HEK293 (cell line): ENCODE measurements at regions of chr16 and their contacts with region 1.

Region 1: DNA sequence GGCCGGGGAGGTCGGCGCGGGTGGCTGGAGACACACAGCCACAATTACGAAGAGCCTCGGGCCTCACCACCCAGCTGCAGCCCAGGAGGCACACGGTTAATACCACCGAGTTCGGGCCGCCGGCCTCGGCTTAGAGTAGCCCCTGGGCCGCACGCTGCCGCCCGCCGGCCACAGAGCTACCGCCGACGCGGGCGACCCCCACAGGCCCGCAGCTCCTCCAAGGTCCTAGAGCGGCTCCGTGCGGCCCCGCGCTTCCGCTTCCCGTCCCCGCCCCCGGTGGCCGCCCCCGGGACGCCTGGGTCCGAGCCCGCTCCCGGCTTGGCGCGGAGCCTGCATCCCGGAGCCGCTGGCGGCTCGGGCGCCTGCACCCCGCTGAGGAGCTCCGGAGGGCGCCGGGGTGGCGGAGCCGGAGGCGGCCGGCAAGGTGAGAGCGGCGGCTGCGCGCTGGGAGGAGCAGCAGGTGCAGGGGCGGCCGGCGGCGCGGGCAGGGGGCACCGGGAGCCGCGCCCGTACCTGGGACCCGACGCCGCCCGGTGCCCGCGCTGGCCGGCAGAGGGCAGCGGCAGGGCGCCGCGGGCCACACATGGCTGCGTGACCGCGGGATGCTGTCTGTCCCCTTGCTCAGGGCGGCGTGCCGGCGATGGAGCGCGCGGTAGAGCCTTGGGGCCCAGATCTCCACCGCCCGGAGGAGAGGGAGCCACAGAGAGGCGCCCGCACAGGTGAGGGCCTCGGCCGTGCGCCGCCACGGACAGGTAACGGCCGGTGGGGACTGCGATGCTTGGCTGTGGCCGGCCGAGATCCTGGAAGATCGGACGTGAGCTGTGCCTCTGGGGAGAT is at the start of gene ZNF48:
- H3K4me3 ChIP-seq: peak within 1 kb of the TSS; percentile 71
- H3K27ac ChIP-seq: peak within 1 kb of the TSS; percentile 84
- H3K4me1 ChIP-seq: peaks cover 16% of the 10 kb centered on the region
- CTCF ChIP-seq: peak; percentile 94

Region 2: DNA sequence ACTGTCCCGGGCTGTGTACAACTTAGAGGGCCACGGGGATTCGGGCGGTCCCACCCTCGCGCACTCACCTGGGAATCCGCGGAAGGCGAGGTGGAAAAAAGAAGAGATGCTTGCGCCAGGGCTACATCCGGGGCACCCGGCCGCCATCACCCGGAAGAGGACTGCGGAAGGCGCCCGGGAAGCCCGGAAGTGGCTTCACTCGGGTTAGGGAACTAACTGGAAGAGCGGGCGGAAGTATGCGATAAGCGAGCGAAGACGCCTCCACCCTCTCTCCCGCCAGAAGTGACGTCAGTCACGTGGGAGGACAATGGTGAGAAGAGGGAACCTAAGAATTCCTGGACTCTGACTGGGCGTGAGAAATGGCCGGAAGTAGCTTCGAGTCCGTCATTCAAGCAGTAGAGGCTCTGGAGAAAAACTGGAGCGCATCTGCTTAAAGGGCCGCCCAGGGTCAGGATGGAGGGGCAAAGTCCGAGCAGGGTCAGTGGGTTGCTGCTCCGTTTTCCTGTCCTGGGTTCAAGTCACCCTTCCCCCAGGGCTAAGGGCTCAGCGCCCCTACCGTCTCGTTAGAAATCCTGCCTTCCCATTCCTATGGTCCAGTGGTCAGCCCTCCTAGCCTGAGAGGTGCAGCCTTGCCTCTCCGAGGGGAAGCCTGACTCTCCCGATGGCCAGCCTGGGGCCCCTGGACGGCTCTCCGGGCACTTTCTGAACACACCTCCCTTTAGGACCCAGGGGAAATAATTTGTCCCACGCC is 40.1 kb before region 1 on chr16 and contains the start of gene CD2BP2:
- CTCF ChIA-PET with region 1: no interaction called
- POLR2A ChIA-PET with region 1: interaction called, 13 read pairs
- H3K4me3 ChIP-seq: peak within 1 kb of the TSS; percentile 95
- H3K27ac ChIP-seq: peak within 1 kb of the TSS; percentile 82
- H3K4me1 ChIP-seq: no peaks in the 10 kb centered on the region
- CTCF ChIP-seq: peak; percentile 63

Region 3: GRCh38 chr16:30370444-30371247 is 24.7 kb before region 1 on chr16 and contains the start of gene TBC1D10B:
- CTCF ChIA-PET with region 1: interaction called, 9 read pairs
- POLR2A ChIA-PET with region 1: interaction called, 26 read pairs
- H3K4me3 ChIP-seq: peak within 1 kb of the TSS; percentile 74
- H3K27ac ChIP-seq: peak within 1 kb of the TSS; percentile 78
- H3K4me1 ChIP-seq: peaks cover 7% of the 10 kb centered on the region
- CTCF ChIP-seq: no peak

Region 4: DNA sequence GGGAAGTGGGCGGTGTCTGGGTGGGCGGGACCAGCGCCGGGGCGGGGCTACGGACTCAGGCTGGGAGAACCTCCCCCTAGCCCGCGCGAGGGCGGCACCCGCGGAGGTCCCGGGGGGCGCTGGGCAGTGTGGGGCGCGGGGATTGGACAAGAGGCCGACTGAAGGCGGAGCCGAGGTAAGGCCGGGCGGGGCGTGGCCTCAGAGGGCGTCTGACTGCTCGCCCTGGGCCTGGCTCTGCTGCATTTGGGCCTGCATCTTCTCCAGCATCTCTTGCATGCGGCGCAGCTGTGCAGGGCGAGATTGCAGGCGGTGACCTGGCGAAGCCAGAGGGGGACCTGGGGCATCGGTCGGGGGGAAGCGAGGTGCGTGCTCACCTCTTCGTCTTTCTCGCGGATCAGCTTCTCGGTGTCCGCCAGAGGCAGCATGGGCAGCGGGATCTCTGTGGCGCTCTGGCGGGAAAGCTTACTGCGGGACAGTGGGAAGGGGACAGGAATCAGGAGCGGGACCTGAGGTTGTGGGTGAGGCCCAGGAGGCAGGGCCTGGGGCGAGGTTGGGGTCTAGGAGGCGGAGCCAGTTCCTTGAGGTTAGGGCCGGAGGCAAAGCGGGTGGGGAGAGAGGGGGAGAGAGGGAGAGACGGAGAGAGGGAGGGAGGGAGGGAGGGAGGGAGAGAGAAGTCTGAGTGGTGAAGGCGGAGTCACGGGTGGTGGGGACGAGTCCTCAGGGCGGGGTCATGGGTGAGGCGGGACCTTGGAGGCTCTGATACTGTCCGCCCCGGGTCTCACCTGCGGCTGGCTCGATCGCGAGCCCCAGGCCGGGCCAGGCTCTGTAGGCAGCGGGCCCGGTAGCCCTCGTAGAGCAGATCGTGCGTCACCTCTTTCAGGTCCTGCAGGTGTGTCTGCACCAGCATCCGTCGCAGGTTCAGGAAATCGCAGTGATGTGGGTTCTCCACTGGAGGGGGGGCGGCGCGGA is 16.9 kb before region 1 on chr16:
- CTCF ChIA-PET with region 1: interaction called, 5 read pairs
- POLR2A ChIA-PET with region 1: interaction called, 30 read pairs
- H3K4me3 ChIP-seq: peak overlapping the region; percentile 78
- H3K27ac ChIP-seq: peak overlapping the region; percentile 97
- H3K4me1 ChIP-seq: no peaks in the 10 kb centered on the region
- CTCF ChIP-seq: peak; percentile 92

Region 5: DNA sequence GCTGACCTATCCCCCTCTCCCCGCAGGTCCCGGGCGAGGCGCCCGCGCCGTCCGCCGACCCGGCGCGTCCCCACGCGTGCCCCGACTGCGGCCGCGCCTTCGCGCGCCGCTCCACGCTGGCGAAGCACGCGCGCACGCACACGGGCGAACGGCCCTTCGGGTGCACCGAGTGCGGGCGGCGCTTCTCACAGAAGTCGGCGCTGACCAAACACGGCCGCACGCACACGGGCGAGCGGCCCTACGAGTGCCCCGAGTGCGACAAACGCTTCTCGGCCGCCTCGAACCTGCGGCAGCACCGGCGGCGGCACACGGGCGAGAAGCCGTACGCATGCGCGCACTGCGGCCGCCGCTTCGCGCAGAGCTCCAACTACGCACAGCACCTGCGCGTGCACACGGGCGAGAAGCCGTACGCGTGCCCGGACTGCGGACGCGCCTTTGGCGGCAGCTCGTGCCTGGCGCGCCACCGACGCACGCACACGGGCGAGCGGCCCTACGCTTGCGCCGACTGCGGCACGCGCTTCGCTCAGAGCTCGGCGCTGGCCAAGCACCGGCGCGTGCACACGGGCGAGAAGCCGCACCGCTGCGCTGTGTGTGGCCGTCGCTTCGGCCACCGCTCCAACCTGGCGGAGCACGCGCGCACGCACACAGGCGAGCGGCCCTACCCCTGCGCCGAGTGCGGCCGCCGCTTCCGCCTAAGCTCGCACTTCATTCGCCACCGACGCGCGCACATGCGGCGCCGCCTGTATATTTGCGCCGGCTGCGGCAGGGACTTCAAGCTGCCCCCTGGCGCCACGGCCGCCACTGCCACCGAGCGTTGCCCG is 22.4 kb after region 1 on chr16:
- CTCF ChIA-PET with region 1: interaction called, 5 read pairs
- POLR2A ChIA-PET with region 1: interaction called, 12 read pairs
- H3K4me3 ChIP-seq: peak overlapping the region; percentile 37
- H3K27ac ChIP-seq: peak overlapping the region; percentile 85
- H3K4me1 ChIP-seq: peaks cover 12% of the 10 kb centered on the region
- CTCF ChIP-seq: peak; percentile 89